ENCODE measurements at regions of chr17 and their contacts with region 1.

Region 1: DNA sequence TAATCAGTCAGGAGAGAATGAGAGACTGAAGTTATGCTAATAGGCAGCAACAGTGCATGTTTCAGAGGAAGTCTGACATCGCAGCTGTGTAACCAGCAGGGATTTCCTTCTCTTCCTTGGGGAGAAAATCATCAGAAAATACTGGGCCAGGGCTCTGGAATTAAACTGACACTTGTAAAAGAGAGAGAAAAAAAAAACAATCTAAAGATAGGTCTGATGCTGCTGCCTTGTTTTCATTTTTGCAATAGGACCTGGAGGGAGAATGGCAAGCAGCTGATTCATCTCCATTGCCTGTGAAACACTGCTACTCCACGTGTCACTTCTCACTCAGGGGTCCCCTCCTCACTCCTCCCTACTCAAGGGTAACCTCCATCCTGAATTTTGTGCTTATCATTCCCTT is 17.7 kb upstream of the CORO6 start:
- DNase-seq: no peak
- ATAC-seq: no peak
- H3K4me3 Mint-ChIP-seq: no peak overlapping the region
- H3K27ac Mint-ChIP-seq: peak overlapping the region; percentile 87
- H3K4me1 Mint-ChIP-seq: peaks cover 34% of the 10 kb centered on the region
- H3K27me3 Mint-ChIP-seq: no peaks in the 10 kb centered on the region
- CTCF ChIP-seq: no peak

Region 2: GRCh38 chr17:29524460-29525091 is 115.8 kb before region 1 on chr17:
- CTCF ChIA-PET with region 1: no interaction called
- POLR2A ChIA-PET with region 1: no interaction called
- intact Hi-C with region 1: no loop called
- DNase-seq: no peak
- ATAC-seq: no peak
- H3K4me3 Mint-ChIP-seq: no peak overlapping the region
- H3K27ac Mint-ChIP-seq: no peak overlapping the region
- H3K4me1 Mint-ChIP-seq: no peaks in the 10 kb centered on the region
- H3K27me3 Mint-ChIP-seq: no peaks in the 10 kb centered on the region
- CTCF ChIP-seq: no peak

Region 3: GRCh38 chr17:29622337-29623282 is 17.8 kb before region 1 on chr17 and contains the start of gene CORO6:
- CTCF ChIA-PET with region 1: interaction called, 41 read pairs
- POLR2A ChIA-PET with region 1: interaction called, 8 read pairs
- intact Hi-C with region 1: no loop called
- DNase-seq: peak; percentile 77
- ATAC-seq: peak; percentile 67
- H3K4me3 Mint-ChIP-seq: peak within 1 kb of the TSS; percentile 77
- H3K27ac Mint-ChIP-seq: peak within 1 kb of the TSS; percentile 71
- H3K4me1 Mint-ChIP-seq: peaks cover 44% of the 10 kb centered on the region
- H3K27me3 Mint-ChIP-seq: no peaks in the 10 kb centered on the region
- CTCF ChIP-seq: no peak
- total RNA-seq, gene CORO6: 11.6 to 13.0 TPM

Region 4: GRCh38 chr17:29653995-29654714 is 13.7 kb after region 1 on chr17:
- CTCF ChIA-PET with region 1: interaction called, 23 read pairs
- POLR2A ChIA-PET with region 1: interaction called, 3 read pairs
- intact Hi-C with region 1: no loop called
- DNase-seq: no peak
- ATAC-seq: no peak
- H3K4me3 Mint-ChIP-seq: no peak overlapping the region
- H3K27ac Mint-ChIP-seq: no peak overlapping the region
- H3K4me1 Mint-ChIP-seq: peaks cover 4% of the 10 kb centered on the region
- H3K27me3 Mint-ChIP-seq: no peaks in the 10 kb centered on the region
- CTCF ChIP-seq: no peak